Vagina (tissue), 2 donors: ENCODE measurements at regions of chr1 and their contacts with region 1.

Region 1: DNA sequence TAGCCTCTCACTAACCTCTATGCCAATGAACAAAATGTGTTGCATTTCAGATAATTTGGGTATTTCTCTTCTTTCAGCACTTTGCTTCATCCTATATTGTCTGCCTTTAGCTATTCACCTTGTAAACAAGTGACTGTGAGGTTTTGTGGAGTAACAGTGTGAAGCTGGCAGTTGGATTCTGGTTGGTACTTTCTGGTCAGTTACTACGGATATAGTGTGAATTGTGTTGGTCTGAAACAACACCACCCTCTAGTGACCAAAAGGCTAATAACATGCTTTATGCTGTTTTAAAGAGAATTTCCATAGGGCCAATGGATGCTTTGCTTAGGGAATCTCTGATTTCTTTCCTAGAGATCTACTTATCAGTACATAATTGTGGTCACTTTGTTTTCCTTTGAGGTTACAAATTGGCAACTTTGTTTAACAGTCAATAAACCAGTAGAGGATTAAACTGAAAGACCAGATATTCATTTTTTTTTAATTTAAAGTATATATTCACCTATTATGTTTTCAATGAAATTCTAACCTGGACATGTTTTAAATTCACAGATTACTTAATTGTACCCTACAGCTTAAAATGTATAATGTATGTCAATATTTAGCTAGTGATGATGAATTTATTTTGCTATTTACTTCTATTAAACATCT is 2.5 kb upstream of the PTGER3 start:
- DNase-seq: no peak
- H3K4me3 ChIP-seq: no peak overlapping the region
- H3K27ac ChIP-seq: no peak overlapping the region
- H3K4me1 ChIP-seq: peaks cover 15% of the 10 kb centered on the region
- H3K27me3 ChIP-seq: no peaks in the 10 kb centered on the region
- CTCF ChIP-seq: peak; percentile 50 to 68 (median 50)
- POLR2A ChIP-seq: no peak

Region 2: GRCh38 chr1:70528590-70529333 is 521.3 kb before region 1 on chr1:
- intact Hi-C with region 1: loop called (anchors 10 kb)
- DNase-seq: no peak
- H3K4me3 ChIP-seq: no peak overlapping the region
- H3K27ac ChIP-seq: no peak overlapping the region
- H3K4me1 ChIP-seq: no peaks in the 10 kb centered on the region
- H3K27me3 ChIP-seq: no peaks in the 10 kb centered on the region
- CTCF ChIP-seq: peak in 1 of 3 experiments; percentile 8
- POLR2A ChIP-seq: no peak

Region 3: GRCh38 chr1:70685300-70686241 is 364.5 kb before region 1 on chr1:
- intact Hi-C with region 1: loop called (anchors 1 kb)
- DNase-seq: no peak
- H3K4me3 ChIP-seq: no peak overlapping the region
- H3K27ac ChIP-seq: no peak overlapping the region
- H3K4me1 ChIP-seq: no peaks in the 10 kb centered on the region
- H3K27me3 ChIP-seq: no peaks in the 10 kb centered on the region
- CTCF ChIP-seq: peak; percentile 41 to 73 (median 52)
- POLR2A ChIP-seq: no peak